PC-9 (cell line): ENCODE measurements at regions of chr6 and their contacts with region 1.

Region 1: GRCh38 chr6:105596284-105596755 is 193.4 kb upstream of the PREP start:
- DNase-seq: peak in 1 of 2 experiments; percentile 98
- H3K4me3 ChIP-seq: no peak overlapping the region
- H3K27ac ChIP-seq: peak overlapping the region; percentile 71
- H3K4me1 ChIP-seq: peaks cover 63% of the 10 kb centered on the region
- H3K27me3 ChIP-seq: no peaks in the 10 kb centered on the region
- CTCF ChIP-seq: no peak

Region 2: GRCh38 chr6:105608711-105609374 is 12.5 kb after region 1 on chr6:
- CTCF ChIA-PET with region 1: interaction called, 3 read pairs
- POLR2A ChIA-PET with region 1: interaction called, 4 read pairs
- intact Hi-C with region 1: loop called (anchors 1 kb)
- DNase-seq: peak; percentile 63 to 99
- H3K4me3 ChIP-seq: no peak overlapping the region
- H3K27ac ChIP-seq: peak overlapping the region; percentile 93
- H3K4me1 ChIP-seq: peaks cover 40% of the 10 kb centered on the region
- H3K27me3 ChIP-seq: no peaks in the 10 kb centered on the region
- CTCF ChIP-seq: no peak